ENCODE measurements at regions of chr17 and their contacts with region 1.

Region 1: DNA sequence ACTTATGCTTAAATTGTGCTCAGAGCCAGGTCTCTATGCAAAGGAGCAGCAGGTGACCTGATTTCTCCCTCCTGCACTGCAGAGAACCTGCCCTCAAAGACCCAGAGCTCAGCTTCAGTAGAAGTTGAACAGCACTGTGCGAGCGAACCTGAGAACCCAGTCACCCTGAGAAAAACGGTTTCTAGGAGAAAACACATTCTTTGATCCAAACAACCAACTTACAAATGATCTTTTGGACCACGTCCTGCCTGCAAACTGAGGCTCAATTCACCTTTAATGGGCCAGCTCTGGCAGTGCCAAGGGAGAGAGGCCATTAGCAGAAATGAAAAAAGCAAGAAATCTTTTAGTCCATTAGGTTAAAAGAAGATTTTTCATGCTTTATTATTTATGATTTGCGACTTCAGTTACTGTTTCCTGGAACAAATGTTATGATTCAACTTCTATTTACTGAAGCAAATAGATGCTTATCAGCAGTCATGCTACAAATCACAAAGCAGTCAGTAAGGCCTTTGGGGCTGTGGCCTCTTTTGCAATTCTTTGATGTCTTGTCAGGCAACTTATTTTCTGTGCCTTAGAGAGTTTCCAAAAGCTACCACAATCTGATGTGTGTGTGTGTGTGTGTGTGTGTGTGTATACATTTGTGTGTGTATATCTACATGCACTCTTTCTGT is 65.7 kb upstream of the LRRC37A3 start:
- DNase-seq: peak; percentile 65
- ATAC-seq: peak; percentile 44
- H3K4me3 Mint-ChIP-seq: peak overlapping the region; percentile 72
- H3K27ac Mint-ChIP-seq: peak overlapping the region; percentile 99
- H3K4me1 Mint-ChIP-seq: peaks cover 49% of the 10 kb centered on the region
- H3K27me3 Mint-ChIP-seq: no peaks in the 10 kb centered on the region

Region 2: DNA sequence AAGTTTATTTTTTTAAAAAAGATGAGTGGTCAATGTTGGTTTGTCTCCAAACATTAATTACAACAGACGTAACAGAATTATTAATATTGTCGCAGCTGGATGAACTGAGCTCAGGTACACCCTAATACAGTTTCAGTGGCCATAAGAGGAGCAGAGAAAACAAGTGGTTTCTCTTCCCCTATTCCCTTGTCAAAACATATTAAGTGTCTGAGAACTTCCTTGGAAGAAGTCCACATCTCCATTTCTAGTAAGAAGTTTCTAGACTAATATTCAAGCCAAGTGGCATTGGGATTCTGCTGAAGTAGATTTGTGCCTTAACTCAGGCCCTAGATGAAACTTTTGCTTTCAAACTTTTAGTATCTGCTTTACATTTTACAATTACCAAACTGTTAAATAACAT is 23.9 kb after region 1 on chr17:
- CTCF ChIA-PET with region 1: no interaction called
- POLR2A ChIA-PET with region 1: no interaction called
- intact Hi-C with region 1: loop called in 1 of 2 experiments (anchors 2 kb)
- DNase-seq: no peak
- ATAC-seq: no peak
- H3K4me3 Mint-ChIP-seq: no peak overlapping the region
- H3K27ac Mint-ChIP-seq: no peak overlapping the region
- H3K4me1 Mint-ChIP-seq: peaks cover 37% of the 10 kb centered on the region
- H3K27me3 Mint-ChIP-seq: no peaks in the 10 kb centered on the region

Region 3: GRCh38 chr17:65039336-65039988 is 54.5 kb after region 1 on chr17:
- CTCF ChIA-PET with region 1: interaction called, 4 read pairs
- POLR2A ChIA-PET with region 1: no interaction called
- intact Hi-C with region 1: loop called in 1 of 2 experiments (anchors 1 kb)
- DNase-seq: peak; percentile 65
- ATAC-seq: peak; percentile 90
- H3K4me3 Mint-ChIP-seq: peak overlapping the region; percentile 54
- H3K27ac Mint-ChIP-seq: peak overlapping the region; percentile 99
- H3K4me1 Mint-ChIP-seq: peaks cover 84% of the 10 kb centered on the region
- H3K27me3 Mint-ChIP-seq: no peaks in the 10 kb centered on the region

Measured in activated CD4-positive, alpha-beta T cell treated with anti-CD3 and anti-CD28 coated beads for 36 hours (primary cell).